Activated naive CD8-positive, alpha-beta T cell treated with anti-CD3 and anti-CD28 coated beads, Interleukin-2, amount 10 ng/mL, durations not matched to agents 7 days and 5 days (primary cell): ENCODE measurements at regions of chr3 and their contacts with region 1.

Region 1: DNA sequence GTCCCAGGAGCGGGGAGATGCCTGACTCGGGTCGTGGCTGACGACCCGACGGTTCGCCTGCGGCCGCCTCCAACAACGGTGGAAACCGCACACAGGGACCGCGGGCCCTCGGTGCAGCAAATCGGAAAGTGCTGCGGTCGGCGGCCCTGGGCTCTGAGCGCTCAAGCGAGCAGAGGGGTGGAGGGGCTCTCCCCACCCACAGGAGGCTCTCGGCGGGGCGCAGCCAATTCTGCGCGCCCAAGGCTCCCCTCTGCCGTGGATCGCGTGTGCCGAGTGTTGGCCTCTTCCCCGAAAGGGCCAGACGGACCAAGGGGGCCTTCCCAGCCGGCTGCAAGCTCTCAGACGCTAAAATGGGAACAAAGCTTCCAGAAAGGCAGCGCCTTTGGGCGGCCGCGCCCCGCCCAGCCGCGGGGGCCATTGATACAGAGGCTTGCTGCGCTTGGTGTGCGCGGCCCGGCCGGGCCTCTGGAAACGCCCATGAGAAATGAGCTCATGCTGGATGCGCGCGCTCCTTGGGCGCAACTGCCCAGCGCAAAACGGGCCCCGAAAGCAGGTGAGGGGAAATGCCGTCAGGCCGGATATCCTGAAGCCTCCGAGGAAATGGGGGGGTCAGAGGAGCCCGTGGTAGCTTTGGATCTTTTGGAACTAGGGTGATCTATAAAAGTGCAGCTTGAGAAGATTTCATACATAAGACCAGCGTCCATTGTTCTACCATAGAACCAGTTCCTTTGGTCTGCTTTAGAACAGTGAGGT is 1.2 kb upstream of the GSK3B start:
- DNase-seq: peak; percentile 91
- ATAC-seq: peak; percentile 44
- H3K4me3 Mint-ChIP-seq: no peak overlapping the region
- H3K27ac Mint-ChIP-seq: no peak overlapping the region
- H3K4me1 Mint-ChIP-seq: peaks cover 18% of the 10 kb centered on the region
- H3K27me3 Mint-ChIP-seq: no peaks in the 10 kb centered on the region

Region 2: DNA sequence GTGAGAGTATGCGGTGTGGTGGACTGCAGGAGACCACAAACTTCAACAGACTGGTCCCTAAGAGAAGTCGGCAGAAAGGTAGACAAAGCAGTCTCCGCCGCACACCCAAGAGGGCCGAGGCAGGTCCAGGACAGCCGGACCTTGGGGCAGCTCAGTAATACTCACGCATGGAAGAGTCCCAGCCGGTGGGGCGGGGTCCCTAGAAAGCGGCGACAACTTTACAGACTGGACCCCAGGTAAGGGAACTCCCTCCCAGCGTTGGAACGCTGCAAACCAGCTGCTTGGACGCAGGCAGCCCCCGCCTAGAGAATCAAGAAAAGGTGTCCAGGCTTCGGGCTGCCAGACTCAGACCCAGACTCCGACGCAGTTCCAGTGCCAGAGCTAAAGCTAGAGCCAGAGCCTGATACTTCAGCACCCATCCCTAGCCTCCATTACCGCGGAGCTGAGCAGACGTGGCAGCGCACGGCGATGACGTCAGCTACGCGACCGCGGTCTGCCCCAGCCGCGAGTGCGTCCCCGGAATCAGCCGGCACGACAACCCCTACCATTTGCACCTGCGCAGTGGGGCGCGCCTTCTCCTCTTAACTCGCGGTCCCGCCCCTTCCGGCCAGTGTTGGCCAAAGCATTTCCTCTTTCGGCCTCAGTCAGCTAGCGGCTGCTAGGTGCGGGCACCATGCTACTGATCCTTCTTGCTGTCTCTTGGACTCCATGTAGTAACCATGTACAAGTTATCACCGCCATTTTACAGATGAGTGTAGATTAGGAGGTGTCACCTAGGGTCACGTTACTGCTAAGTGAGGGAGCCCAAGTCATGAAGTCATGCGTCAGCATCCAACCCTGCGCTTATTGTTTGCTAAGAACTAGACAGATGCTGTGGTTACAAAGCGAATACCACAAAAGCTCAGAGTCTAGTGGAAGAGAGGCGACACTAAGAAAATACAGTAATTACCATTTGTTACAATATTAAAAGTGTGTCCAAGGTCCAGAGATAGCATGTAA is 631.9 kb before region 1 on chr3 and contains the start of gene TMEM39A:
- POLR2A ChIA-PET with region 1: interaction called, 15 read pairs
- DNase-seq: peak; percentile 99
- ATAC-seq: peak; percentile 89
- H3K4me3 Mint-ChIP-seq: peak within 1 kb of the TSS; percentile 92
- H3K27ac Mint-ChIP-seq: peak within 1 kb of the TSS; percentile 99
- H3K4me1 Mint-ChIP-seq: peaks cover 40% of the 10 kb centered on the region
- H3K27me3 Mint-ChIP-seq: no peaks in the 10 kb centered on the region
- total RNA-seq, gene TMEM39A: 29.8 to 35.0 TPM

Region 3: DNA sequence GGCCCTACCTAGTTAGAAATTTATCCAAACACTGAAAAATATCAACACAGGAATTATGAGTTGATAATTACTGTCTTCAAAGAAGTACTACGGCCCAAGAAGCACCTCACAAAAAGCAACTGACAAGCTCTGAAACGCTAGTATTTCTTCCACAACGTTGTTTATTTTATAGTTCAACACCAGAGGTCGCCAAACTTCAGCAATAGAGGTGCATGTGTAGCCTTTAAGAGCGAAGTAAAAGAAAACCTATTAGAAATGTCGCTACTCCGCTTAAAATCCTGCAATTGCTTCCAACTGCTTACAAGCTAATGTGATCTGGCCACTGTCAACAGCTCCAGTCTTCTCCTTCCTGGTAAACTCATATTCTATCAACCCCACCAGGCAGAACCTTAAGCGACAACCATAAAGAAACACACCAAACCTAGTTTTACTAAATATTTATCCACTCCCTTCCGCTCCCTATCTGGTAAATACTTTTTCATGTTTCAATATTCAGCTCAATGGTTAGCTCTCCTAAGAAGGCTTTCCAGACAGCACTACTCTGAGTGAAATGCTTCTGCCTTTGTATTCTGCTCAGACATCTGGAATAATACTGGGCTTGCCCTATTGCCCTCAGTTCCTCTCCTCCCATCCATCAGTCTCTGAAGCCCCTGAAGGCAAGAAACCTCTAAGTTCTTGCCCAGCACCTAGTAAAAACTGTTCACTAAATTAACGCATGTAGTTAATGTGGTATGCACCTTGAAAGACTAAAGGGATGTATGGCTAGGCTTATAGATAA is 203.3 kb before region 1 on chr3:
- POLR2A ChIA-PET with region 1: interaction called, 29 read pairs
- DNase-seq: no peak
- ATAC-seq: peak; percentile 66
- H3K4me3 Mint-ChIP-seq: no peak overlapping the region
- H3K27ac Mint-ChIP-seq: no peak overlapping the region
- H3K4me1 Mint-ChIP-seq: peaks cover 8% of the 10 kb centered on the region
- H3K27me3 Mint-ChIP-seq: no peaks in the 10 kb centered on the region

Region 4: DNA sequence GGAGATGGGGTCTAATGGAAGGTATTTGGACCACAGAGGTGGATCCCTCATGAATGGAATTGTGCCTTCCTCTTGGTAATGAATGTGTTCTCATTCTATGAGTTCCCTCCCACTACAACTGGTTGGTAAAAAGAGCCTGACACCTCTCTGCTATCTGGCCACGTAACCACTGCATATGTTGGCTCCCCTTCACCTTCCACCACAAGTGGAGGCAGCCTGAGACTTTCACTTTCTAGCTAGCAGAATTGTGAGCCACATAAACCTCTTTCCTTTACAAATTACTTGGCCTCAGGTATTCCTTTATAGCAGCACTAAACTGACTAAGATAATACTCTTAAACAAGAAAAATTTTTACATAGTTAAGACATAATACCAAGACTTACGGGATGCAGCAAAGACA is 158.2 kb before region 1 on chr3:
- POLR2A ChIA-PET with region 1: interaction called, 11 read pairs
- DNase-seq: peak; percentile 42
- ATAC-seq: peak; percentile 99
- H3K4me3 Mint-ChIP-seq: peak overlapping the region; percentile 81
- H3K27ac Mint-ChIP-seq: peak overlapping the region; percentile 86
- H3K4me1 Mint-ChIP-seq: peaks cover 33% of the 10 kb centered on the region
- H3K27me3 Mint-ChIP-seq: no peaks in the 10 kb centered on the region

Region 5: GRCh38 chr3:120348981-120349818 is 253.8 kb after region 1 on chr3 and contains the start of gene LRRC58:
- POLR2A ChIA-PET with region 1: interaction called, 43 read pairs
- DNase-seq: peak; percentile 95
- ATAC-seq: peak; percentile 85
- H3K4me3 Mint-ChIP-seq: peak within 1 kb of the TSS; percentile 89
- H3K27ac Mint-ChIP-seq: peak within 1 kb of the TSS; percentile 87
- H3K4me1 Mint-ChIP-seq: peaks cover 35% of the 10 kb centered on the region
- H3K27me3 Mint-ChIP-seq: peaks cover 22% of the 10 kb centered on the region
- total RNA-seq, gene LRRC58: 21.5 to 22.8 TPM